Activated naive CD4-positive, alpha-beta T cell treated with anti-CD3 and anti-CD28 coated beads for 36 hours (primary cell): ENCODE measurements at regions of chr7 and their contacts with region 1.

Region 1: DNA sequence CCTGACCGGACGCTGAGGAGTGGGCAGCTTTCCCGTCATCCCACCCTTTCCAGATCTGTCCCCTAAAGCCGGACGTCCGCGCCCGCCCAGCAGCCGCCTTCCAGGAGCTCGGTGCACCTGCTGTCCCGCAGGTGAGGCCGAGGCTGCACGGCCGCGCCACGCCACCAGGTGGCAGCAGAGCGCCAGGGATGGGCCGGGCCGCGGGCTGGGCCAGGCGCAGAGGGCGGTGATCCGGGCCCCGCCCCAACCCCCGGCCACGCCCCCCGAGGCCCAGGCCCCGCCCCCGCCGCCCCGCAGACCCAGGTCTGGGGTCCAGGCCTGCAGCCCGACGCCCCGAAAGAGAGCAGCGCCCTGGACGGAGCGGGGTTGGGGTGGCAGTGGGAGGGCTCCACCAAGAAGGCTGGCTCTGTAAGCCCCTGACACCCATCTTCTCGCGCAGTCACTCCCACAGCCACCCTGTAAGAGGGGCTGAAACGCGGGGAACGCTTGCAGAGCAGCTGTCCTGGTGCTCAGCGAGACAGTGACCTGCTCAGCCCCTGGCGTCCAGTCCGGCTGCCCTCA is 32.2 kb downstream of the FOXL3 start:
- DNase-seq: peak; percentile 83
- H3K4me3 Mint-ChIP-seq: no peak overlapping the region
- H3K27ac Mint-ChIP-seq: no peak overlapping the region
- H3K4me1 Mint-ChIP-seq: no peaks in the 10 kb centered on the region
- H3K27me3 Mint-ChIP-seq: peaks cover 21% of the 10 kb centered on the region

Region 2: GRCh38 chr7:166338-167060 is 155.7 kb before region 1 on chr7:
- CTCF ChIA-PET with region 1: no interaction called
- intact Hi-C with region 1: no loop called
- DNase-seq: no peak
- H3K4me3 Mint-ChIP-seq: no peak overlapping the region
- H3K27ac Mint-ChIP-seq: no peak overlapping the region
- H3K4me1 Mint-ChIP-seq: no peaks in the 10 kb centered on the region
- H3K27me3 Mint-ChIP-seq: peaks cover 12% of the 10 kb centered on the region

Region 3: GRCh38 chr7:774161-775109 is 452.2 kb after region 1 on chr7:
- CTCF ChIA-PET with region 1: interaction called, 7 read pairs
- intact Hi-C with region 1: loop called (anchors 1 kb)
- DNase-seq: peak; percentile 64
- H3K4me3 Mint-ChIP-seq: no peak overlapping the region
- H3K27ac Mint-ChIP-seq: no peak overlapping the region
- H3K4me1 Mint-ChIP-seq: no peaks in the 10 kb centered on the region
- H3K27me3 Mint-ChIP-seq: no peaks in the 10 kb centered on the region